GM12878 (cell line): ENCODE measurements at regions of chr1 and their contacts with region 1.

Region 1: GRCh38 chr1:155527677-155528076 is 34.9 kb downstream of the ASH1L start:
- DNase-seq: no peak
- ATAC-seq: no peak
- H3K4me3 ChIP-seq: no peak overlapping the region
- H3K27ac ChIP-seq: no peak overlapping the region
- H3K4me1 ChIP-seq: peaks cover 27% of the 10 kb centered on the region
- H3K27me3 ChIP-seq: no peaks in the 10 kb centered on the region
- CTCF ChIP-seq: no peak
- EP300 ChIP-seq: no peak
- POLR2A ChIP-seq: no peak
- RAD21 ChIP-seq: no peak

Region 2: DNA sequence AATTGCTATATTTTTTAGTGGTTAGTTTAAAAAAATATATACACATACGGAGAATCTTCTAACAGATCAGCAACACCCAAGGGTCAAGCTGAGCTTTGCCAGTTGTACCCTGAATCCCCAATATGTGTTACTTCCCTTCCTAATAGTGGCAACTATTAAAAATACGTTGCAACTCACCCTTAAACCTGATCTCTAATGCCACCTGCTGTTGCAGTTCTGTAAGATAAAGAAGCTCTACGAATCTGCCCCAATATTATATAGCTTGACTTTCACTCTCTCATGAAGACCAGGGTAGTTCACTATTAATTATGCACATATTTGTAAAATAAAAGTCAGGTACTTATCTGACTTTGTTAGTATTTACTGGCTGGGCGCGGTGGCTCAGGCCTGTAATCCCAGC is 23.5 kb before region 1 on chr1:
- CTCF ChIA-PET with region 1: interaction called, 12 read pairs
- POLR2A ChIA-PET with region 1: interaction called, 6 read pairs
- RAD21 ChIA-PET with region 1: interaction called, 5 read pairs
- SMC1A ChIA-PET with region 1: interaction called, 14 read pairs
- in situ Hi-C with region 1: no loop called
- intact Hi-C with region 1: no loop called
- DNase-seq: no peak
- ATAC-seq: peak; percentile 80
- H3K4me3 ChIP-seq: no peak overlapping the region
- H3K27ac ChIP-seq: peak overlapping the region; percentile 38; the same call in 1 of the 2 replicates
- H3K4me1 ChIP-seq: peaks cover 27% of the 10 kb centered on the region
- H3K27me3 ChIP-seq: no peaks in the 10 kb centered on the region
- CTCF ChIP-seq: peak; percentile 38 to 62 (median 52); a peak in 5 of 6 replicates
- EP300 ChIP-seq: no peak
- POLR2A ChIP-seq: no peak
- RAD21 ChIP-seq: peak; percentile 72

Region 3: GRCh38 chr1:155540000-155540874 is 12.6 kb after region 1 on chr1:
- CTCF ChIA-PET with region 1: interaction called, 8 read pairs
- POLR2A ChIA-PET with region 1: interaction called, 10 read pairs
- RAD21 ChIA-PET with region 1: interaction called, 41 read pairs
- SMC1A ChIA-PET with region 1: interaction called, 44 read pairs
- in situ Hi-C with region 1: no loop called
- intact Hi-C with region 1: no loop called
- DNase-seq: no peak
- ATAC-seq: peak; percentile 58
- H3K4me3 ChIP-seq: peak overlapping the region; percentile 2; the same call in 1 of the 2 replicates
- H3K27ac ChIP-seq: peak overlapping the region; percentile 80
- H3K4me1 ChIP-seq: peaks cover 38% of the 10 kb centered on the region
- H3K27me3 ChIP-seq: no peaks in the 10 kb centered on the region
- CTCF ChIP-seq: no peak
- EP300 ChIP-seq: no peak
- POLR2A ChIP-seq: no peak
- RAD21 ChIP-seq: no peak

Region 4: GRCh38 chr1:155548706-155549105 is 21.0 kb after region 1 on chr1:
- CTCF ChIA-PET with region 1: no interaction called
- POLR2A ChIA-PET with region 1: interaction called, 22 read pairs
- RAD21 ChIA-PET with region 1: interaction called, 33 read pairs
- SMC1A ChIA-PET with region 1: interaction called, 7 read pairs
- in situ Hi-C with region 1: no loop called
- intact Hi-C with region 1: no loop called
- DNase-seq: no peak
- ATAC-seq: no peak; the same call in 2 of the 3 replicates
- H3K4me3 ChIP-seq: no peak overlapping the region
- H3K27ac ChIP-seq: peak overlapping the region; percentile 67
- H3K4me1 ChIP-seq: peaks cover 20% of the 10 kb centered on the region
- H3K27me3 ChIP-seq: no peaks in the 10 kb centered on the region
- CTCF ChIP-seq: no peak
- EP300 ChIP-seq: no peak
- POLR2A ChIP-seq: no peak
- RAD21 ChIP-seq: no peak

Region 5: DNA sequence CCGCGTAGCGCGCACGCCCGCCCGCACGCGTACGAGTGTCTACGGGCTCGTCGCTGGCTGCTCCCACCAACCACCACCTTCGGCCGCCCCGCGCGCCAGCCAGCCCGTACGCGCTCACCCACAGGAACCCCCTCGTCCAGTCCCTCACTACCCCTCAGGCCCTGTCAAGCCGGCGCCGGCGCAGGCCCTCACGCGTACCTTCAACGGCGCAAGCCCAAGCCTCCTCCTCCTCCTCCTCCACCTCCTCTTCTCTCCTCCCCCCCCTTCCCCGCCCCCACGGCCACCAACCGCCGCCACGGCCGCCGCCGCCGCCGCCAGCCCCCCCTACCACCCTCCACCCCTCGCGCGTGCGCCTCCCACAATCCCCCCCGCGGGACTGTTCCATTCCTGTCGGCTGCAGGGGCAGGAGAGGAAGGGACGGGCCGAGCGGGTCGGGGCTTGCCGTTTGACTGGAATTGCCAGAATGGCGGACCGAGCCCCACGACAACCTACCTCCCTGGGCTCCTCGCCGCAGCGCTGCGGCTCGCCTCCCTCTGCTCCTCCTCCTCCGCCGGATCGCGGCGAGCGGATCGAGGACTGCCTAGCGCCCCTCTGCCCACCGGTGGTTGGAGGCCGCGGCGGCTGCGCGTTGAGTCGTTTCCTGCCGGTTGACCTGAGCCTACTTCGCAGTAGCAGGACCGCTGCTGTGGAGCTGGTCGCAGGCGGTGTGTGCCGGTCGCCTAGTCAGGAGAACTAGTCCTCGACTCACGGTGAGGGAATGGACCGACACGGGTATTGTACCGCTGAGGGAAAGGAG is 35.1 kb after region 1 on chr1 and contains the start of gene ASH1L:
- CTCF ChIA-PET with region 1: no interaction called
- POLR2A ChIA-PET with region 1: interaction called, 4 read pairs
- RAD21 ChIA-PET with region 1: interaction called, 3 read pairs
- SMC1A ChIA-PET with region 1: interaction called, 9 read pairs
- in situ Hi-C with region 1: no loop called
- intact Hi-C with region 1: loop called (anchors 2 kb)
- DNase-seq: peak; percentile 71
- ATAC-seq: peak; percentile 88
- H3K4me3 ChIP-seq: peak within 1 kb of the TSS; percentile 93
- H3K27ac ChIP-seq: peak within 1 kb of the TSS; percentile 99
- H3K4me1 ChIP-seq: no peaks in the 10 kb centered on the region; the same call in 1 of the 2 replicates
- H3K27me3 ChIP-seq: no peaks in the 10 kb centered on the region
- CTCF ChIP-seq: no peak
- EP300 ChIP-seq: no peak
- POLR2A ChIP-seq: peak; percentile 89
- RAD21 ChIP-seq: no peak
- polyA plus RNA-seq, gene ASH1L: 1.7 to 5.9 TPM

Region 6: GRCh38 chr1:155636397-155637153 is 108.9 kb after region 1 on chr1:
- CTCF ChIA-PET with region 1: no interaction called
- POLR2A ChIA-PET with region 1: no interaction called
- RAD21 ChIA-PET with region 1: no interaction called
- SMC1A ChIA-PET with region 1: no interaction called
- in situ Hi-C with region 1: no loop called
- intact Hi-C with region 1: no loop called
- DNase-seq: no peak
- ATAC-seq: peak; percentile 79
- H3K4me3 ChIP-seq: peak overlapping the region; percentile 34; the same call in 1 of the 2 replicates
- H3K27ac ChIP-seq: no peak overlapping the region
- H3K4me1 ChIP-seq: no peaks in the 10 kb centered on the region; the same call in 1 of the 2 replicates
- H3K27me3 ChIP-seq: no peaks in the 10 kb centered on the region
- CTCF ChIP-seq: no peak
- EP300 ChIP-seq: no peak
- POLR2A ChIP-seq: no peak
- RAD21 ChIP-seq: no peak